Activated naive CD4-positive, alpha-beta T cell treated with anti-CD3 and anti-CD28 coated beads for 36 hours (primary cell): ENCODE measurements at regions of chr7 and their contacts with region 1.

Region 1: GRCh38 chr7:41940760-41941343 is 238.0 kb upstream of the INHBA start:
- DNase-seq: peak; percentile 70
- H3K4me3 Mint-ChIP-seq: no peak overlapping the region
- H3K27ac Mint-ChIP-seq: no peak overlapping the region
- H3K4me1 Mint-ChIP-seq: peaks cover 6% of the 10 kb centered on the region
- H3K27me3 Mint-ChIP-seq: peaks cover 24% of the 10 kb centered on the region

Region 2: DNA sequence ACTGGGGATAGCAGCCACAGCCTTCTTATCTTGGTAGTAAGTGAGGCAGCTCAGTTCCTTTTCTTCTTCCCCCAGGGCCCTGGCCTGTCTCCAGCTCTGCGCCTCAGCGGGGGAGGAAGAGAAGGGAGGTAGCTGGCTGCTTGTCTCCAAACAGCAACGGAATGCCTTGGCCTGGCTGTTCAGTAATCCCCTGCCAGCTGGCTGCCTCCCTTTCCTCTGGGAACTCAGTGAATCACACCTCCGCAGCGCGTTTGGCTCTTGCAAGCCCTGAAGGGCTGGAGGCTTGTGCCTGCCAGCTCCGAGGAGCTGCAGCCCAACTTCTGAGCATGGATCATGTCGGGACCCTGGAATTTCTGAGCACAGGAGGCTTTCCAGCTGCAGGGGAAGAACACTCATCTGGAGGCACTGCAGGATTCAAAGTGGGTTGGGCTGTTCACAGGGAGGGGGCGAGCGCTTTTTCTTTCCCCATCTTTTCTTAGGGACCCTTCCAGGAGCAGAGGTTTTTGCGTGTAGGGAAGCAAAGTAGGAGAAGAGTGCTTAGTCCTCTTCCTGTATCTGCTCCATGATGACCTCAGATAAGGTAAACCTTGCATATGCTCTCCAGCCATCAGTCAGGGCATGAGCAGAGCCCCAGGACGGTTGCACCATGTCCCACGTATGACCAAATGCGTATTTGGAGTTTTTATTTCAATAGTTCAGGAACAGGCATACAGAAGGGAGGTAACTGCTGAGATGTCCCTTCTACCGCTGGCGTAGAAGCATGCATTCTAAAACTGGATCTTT is 15.2 kb after region 1 on chr7:
- CTCF ChIA-PET with region 1: interaction called, 15 read pairs
- intact Hi-C with region 1: no loop called
- DNase-seq: no peak
- H3K4me3 Mint-ChIP-seq: no peak overlapping the region
- H3K27ac Mint-ChIP-seq: no peak overlapping the region
- H3K4me1 Mint-ChIP-seq: no peaks in the 10 kb centered on the region
- H3K27me3 Mint-ChIP-seq: peaks cover 38% of the 10 kb centered on the region

Region 3: GRCh38 chr7:42128703-42129102 is 187.9 kb after region 1 on chr7:
- CTCF ChIA-PET with region 1: no interaction called
- intact Hi-C with region 1: no loop called
- DNase-seq: peak; percentile 33
- H3K4me3 Mint-ChIP-seq: no peak overlapping the region
- H3K27ac Mint-ChIP-seq: no peak overlapping the region
- H3K4me1 Mint-ChIP-seq: no peaks in the 10 kb centered on the region
- H3K27me3 Mint-ChIP-seq: peaks cover 2% of the 10 kb centered on the region

Region 4: GRCh38 chr7:42395607-42396006 is 454.8 kb after region 1 on chr7:
- CTCF ChIA-PET with region 1: no interaction called
- intact Hi-C with region 1: no loop called
- DNase-seq: no peak
- H3K4me3 Mint-ChIP-seq: no peak overlapping the region
- H3K27ac Mint-ChIP-seq: no peak overlapping the region
- H3K4me1 Mint-ChIP-seq: no peaks in the 10 kb centered on the region
- H3K27me3 Mint-ChIP-seq: peaks cover 2% of the 10 kb centered on the region

Region 5: DNA sequence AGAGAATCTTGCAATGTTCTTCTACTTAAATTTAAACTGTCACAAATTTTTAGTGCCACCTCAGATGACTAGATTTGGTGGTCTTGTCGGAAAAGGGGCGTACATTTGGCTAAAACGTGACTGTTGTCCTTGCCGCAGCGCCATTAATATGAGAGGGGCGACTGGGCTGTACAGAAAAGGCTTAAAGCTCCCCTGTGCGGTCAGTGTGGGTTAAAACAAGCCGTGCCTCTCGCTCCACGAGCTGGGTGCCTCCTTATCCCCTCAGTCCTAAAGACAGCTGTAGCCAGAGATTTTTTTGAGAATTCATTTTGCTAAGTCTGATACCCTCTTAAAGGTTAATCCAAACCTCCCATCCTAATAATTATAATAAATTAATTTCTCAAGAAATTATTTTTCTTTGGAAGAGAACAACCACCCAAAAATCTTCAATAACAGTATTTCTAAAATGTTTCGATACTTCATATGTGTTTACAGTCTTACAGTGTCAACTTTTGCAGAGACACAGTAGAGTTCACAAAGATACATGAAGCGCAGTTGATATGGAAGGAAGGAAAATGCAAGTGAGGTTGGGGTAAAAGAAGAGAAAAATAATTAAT is 902.5 kb after region 1 on chr7:
- CTCF ChIA-PET with region 1: no interaction called
- intact Hi-C with region 1: loop called (anchors 1 kb)
- DNase-seq: peak; percentile 45
- H3K4me3 Mint-ChIP-seq: no peak overlapping the region
- H3K27ac Mint-ChIP-seq: no peak overlapping the region
- H3K4me1 Mint-ChIP-seq: no peaks in the 10 kb centered on the region
- H3K27me3 Mint-ChIP-seq: peaks cover 17% of the 10 kb centered on the region

Region 6: GRCh38 chr7:43439631-43440401 is 1499.0 kb after region 1 on chr7:
- CTCF ChIA-PET with region 1: interaction called, 3 read pairs
- intact Hi-C with region 1: loop called (anchors 10 kb)
- DNase-seq: peak; percentile 72
- H3K4me3 Mint-ChIP-seq: no peak overlapping the region
- H3K27ac Mint-ChIP-seq: no peak overlapping the region
- H3K4me1 Mint-ChIP-seq: peaks cover 5% of the 10 kb centered on the region
- H3K27me3 Mint-ChIP-seq: no peaks in the 10 kb centered on the region